ENCODE measurements at regions of chr7 and their contacts with region 1.

Region 1: DNA sequence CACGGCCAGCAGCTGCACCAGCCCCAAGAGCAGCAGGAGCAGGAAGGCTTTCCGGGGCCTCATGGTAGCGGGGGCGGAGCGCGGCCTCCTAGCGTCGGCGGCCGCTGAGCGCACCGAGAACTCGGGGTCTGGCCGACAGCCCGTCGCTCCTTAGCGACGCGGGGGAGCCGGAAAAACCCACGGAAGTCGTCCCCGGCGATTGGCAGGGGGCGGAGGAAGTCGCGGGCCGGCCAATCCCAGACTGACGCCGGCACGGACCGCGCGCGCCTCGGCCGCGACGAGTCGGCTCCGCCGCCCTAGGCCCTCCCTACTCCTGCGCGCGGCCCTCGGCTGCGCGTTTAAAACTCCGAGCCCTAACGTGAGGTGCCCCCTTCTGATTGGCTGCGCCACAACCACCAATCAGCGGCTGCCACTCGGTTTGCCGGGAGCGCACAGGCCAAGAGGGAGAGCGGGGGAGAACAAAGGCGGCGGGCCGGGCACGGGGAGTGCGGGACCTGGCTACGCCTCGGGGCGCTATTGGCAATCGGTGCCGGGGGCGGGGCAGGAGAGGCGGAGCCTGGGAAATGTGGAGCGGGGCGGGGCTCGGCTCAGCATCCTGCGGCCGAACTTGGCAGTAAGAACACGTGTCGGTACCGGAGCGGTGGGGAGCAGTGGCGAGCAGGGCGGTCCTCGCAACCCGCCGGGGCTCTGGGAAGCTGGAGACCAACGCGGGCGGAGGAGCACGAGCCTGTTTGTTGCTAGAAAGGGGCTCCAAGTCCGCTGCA is at the start of gene PDIA4:
- DNase-seq: peak; percentile 100
- H3K4me3 Mint-ChIP-seq: peak within 1 kb of the TSS; percentile 98
- H3K27ac Mint-ChIP-seq: peak within 1 kb of the TSS; percentile 93
- H3K4me1 Mint-ChIP-seq: peaks cover 32% of the 10 kb centered on the region
- H3K27me3 Mint-ChIP-seq: peaks cover 2% of the 10 kb centered on the region
- total RNA-seq, gene PDIA4: 155 and 159 TPM in 2 replicates

Region 2: GRCh38 chr7:148884299-148885022 is 144.1 kb before region 1 on chr7:
- intact Hi-C with region 1: loop called (anchors 1 kb)
- DNase-seq: peak; percentile 92
- H3K4me3 Mint-ChIP-seq: peak overlapping the region; percentile 94
- H3K27ac Mint-ChIP-seq: peak overlapping the region; percentile 98
- H3K4me1 Mint-ChIP-seq: peaks cover 29% of the 10 kb centered on the region
- H3K27me3 Mint-ChIP-seq: no peaks in the 10 kb centered on the region

Region 3: GRCh38 chr7:149067876-149068275 is 39.3 kb after region 1 on chr7:
- intact Hi-C with region 1: loop called (anchors 1 kb)
- DNase-seq: no peak
- H3K4me3 Mint-ChIP-seq: no peak overlapping the region
- H3K27ac Mint-ChIP-seq: no peak overlapping the region
- H3K4me1 Mint-ChIP-seq: peaks cover 5% of the 10 kb centered on the region
- H3K27me3 Mint-ChIP-seq: no peaks in the 10 kb centered on the region

Region 4: GRCh38 chr7:149125863-149126661 is 97.5 kb after region 1 on chr7 and contains the start of gene ZNF425:
- intact Hi-C with region 1: loop called (anchors 1 kb)
- DNase-seq: peak; percentile 91
- H3K4me3 Mint-ChIP-seq: peak within 1 kb of the TSS; percentile 100
- H3K27ac Mint-ChIP-seq: peak within 1 kb of the TSS; percentile 100
- H3K4me1 Mint-ChIP-seq: peaks cover 19% of the 10 kb centered on the region
- H3K27me3 Mint-ChIP-seq: no peaks in the 10 kb centered on the region
- total RNA-seq, gene ZNF425: 0.39 and 1.0 TPM in 2 replicates

Region 5: GRCh38 chr7:149239345-149240191 is 211.0 kb after region 1 on chr7 and contains the start of gene ZNF212:
- intact Hi-C with region 1: loop called (anchors 10 kb)
- DNase-seq: peak; percentile 83
- H3K4me3 Mint-ChIP-seq: peak within 1 kb of the TSS; percentile 91
- H3K27ac Mint-ChIP-seq: peak within 1 kb of the TSS; percentile 87
- H3K4me1 Mint-ChIP-seq: peaks cover 26% of the 10 kb centered on the region
- H3K27me3 Mint-ChIP-seq: no peaks in the 10 kb centered on the region
- total RNA-seq, gene ZNF212: 18.4 and 20.1 TPM in 2 replicates